GM10248 (cell line): ENCODE measurements at regions of chr6 and their contacts with region 1.

Region 1: DNA sequence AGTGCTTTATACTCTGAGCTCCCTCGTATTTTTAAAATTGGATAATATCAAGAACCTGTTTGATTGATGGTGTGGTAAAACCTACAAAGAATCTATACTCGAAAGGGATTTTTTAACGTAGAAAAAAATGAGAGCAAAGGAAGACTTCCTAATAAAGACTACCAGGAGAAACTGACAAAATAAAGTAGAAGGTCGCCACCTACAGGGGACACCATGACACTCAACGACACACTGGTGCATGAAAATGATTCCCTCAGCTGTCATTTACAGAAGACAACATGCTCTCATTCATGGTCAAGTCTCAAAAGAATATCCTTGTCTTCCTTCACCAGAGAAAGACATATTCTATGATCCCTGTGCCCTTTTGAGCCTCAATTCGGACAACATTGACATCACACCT is 10.1 kb upstream of the NHSL1 start:
- DNase-seq: peak; percentile 28
- CTCF ChIP-seq: peak; percentile 63

Region 2: DNA sequence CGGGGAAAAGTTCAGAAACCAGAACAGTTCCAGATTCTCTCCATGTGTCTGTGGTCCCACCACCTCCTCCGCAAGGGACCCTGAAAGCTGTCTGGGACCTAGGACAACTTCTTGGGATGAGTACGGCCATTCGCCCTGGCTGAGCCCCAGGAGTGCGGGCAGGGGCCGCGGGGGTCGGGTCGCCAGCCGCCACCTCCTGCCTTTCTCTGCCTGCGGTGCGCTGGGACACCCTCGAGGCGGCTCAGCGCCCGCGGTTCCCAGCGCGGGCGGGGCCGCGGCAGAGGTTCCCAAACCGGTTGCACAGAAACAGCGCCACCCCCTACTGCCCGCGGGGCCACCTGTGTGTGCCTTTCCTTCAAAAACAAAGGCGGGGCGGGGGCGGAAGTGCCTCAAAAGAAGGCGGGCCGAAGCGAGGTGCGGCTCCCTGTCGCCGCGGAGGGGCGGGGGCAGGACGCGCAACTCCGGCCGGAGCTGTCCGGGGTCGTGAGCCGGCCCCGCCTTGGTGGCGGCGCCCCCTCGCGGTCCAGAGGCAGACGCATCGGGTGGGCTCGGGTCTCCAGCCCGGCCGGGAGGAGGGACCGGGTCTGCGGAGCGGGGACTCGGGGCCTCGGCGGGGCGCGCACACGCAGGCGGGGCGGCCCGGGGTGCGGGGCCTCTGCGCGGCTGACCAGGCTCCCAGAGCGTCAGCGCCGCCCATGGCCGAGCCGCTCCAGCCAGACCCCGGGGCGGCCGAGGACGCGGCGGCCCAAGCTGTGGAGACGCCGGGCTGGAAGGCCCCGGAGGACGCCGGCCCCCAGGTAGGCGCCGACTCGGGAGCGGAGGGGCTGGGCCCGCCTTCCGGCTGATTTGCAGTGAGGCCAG is 105.3 kb before region 1 on chr6 and contains the start of gene HEBP2:
- CTCF ChIA-PET with region 1: interaction called, 13 read pairs
- POLR2A ChIA-PET with region 1: no interaction called
- DNase-seq: peak; percentile 92
- CTCF ChIP-seq: peak; percentile 65

Region 3: DNA sequence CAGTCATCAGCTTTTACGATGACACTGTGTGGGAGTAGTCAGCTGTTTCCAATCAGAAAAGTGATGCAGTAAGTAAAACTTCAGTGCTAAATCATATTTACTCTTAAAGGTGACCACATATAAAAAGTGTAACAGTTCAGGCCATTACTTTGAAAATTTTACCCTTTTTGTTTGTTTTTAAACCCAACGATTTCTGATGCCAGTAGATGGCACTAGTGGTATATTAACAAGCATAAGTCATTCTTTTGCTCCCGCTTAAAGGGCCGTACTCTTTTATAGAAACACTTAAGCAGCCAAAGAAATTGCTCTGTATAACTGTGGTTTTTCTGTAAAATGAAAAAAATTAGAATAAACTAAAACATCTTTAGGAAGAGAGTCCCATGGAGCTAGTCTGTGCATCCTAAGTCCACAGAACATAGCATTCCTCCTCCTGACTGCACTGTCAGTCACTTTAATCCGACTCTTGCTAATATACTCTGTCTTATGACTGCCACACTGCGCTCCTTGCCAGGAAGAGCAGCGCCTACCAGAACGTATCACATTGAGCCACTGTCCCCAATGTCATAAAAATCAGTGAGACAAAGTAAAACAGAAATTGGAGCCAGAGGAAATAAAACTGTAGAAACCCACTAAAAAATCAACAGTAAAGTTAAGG is 80.3 kb before region 1 on chr6:
- CTCF ChIA-PET with region 1: interaction called, 93 read pairs
- POLR2A ChIA-PET with region 1: interaction called, 3 read pairs
- DNase-seq: peak; percentile 56
- CTCF ChIP-seq: peak; percentile 37

Region 4: DNA sequence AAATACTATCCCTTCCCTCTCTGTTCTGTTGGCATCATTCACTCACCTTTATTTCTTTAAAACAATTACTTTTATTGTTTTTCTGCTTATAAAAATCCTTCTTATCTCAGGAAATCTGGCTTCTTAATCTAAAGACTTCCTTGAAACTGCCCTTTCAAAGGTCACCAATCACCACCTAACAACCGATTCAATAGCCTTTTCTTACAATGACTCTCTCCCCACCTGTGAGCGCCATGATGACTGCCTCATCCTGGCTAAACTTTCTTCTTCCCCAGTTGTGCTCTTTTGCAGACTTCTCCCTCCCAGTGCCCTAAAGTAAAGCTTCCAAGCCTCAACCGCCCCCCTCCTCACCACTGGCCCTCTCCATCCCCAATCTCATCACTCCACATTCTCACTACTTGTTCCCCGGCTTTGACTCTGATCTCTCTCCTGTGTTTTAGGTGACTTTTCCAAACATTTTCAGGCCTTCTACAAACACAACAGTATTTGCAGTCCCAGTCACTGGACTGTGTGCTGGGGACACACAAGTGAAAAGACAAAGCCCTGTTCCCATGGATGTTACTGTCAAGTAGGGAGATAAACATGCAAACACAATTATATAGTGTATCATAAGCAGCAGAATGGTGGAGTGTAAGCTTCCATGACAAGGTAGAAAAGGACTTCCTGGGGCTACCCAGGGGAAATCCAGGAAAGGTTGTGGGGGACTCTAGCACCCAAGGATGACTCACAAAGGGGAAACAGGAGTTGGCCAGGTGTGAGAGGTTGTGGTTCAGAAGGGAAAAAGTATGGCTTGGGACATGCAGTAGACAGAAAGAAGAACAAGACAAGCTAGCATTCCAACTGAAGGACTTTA is 22.9 kb before region 1 on chr6:
- CTCF ChIA-PET with region 1: interaction called, 11 read pairs
- POLR2A ChIA-PET with region 1: no interaction called
- DNase-seq: no peak
- CTCF ChIP-seq: no peak

Region 5: GRCh38 chr6:138493413-138493812 is 16.0 kb before region 1 on chr6:
- CTCF ChIA-PET with region 1: interaction called, 20 read pairs
- POLR2A ChIA-PET with region 1: no interaction called
- DNase-seq: no peak
- CTCF ChIP-seq: no peak